IMR-90 (cell line): ENCODE measurements at regions of chr12 and their contacts with region 1.

Region 1: GRCh38 chr12:109255377-109255776 is 53.7 kb downstream of the FOXN4 start:
- DNase-seq: peak; percentile 21
- ATAC-seq: peak; percentile 96
- H3K4me3 ChIP-seq: no peak overlapping the region
- H3K27ac ChIP-seq: no peak overlapping the region
- H3K4me1 ChIP-seq: no peaks in the 10 kb centered on the region
- H3K27me3 ChIP-seq: no peaks in the 10 kb centered on the region
- CTCF ChIP-seq: peak; percentile 33; the same call in 1 of the 2 replicates
- POLR2A ChIP-seq: no peak
- RAD21 ChIP-seq: peak; percentile 41; the same call in 1 of the 2 replicates

Region 2: DNA sequence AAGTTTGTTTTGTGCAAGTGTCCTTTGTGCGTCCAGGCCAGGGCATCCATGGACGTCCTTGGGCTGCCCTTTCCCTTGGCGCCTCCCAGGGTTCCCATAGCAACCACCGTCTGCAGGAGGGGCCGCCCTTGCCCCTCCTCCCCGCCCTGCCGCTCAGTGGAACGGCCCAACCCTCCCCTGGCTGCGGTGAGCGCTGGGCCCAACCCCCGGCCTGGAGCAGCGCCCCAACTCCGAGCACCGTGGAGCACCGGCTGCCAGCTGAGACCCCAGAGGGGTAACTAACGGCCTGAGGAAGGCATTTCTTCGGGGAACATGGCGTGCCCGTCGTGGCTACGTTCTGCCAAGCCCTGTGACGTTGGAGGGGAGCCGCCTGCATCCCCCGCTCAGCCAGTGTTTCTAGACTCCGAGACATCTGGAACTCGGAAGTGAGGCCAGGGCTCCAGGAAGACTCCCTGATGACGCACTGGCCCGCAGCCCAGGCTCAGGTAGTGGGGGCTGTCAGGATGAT is 144.3 kb before region 1 on chr12:
- CTCF ChIA-PET with region 1: no interaction called
- POLR2A ChIA-PET with region 1: no interaction called
- dilution Hi-C with region 1: no loop called
- in situ Hi-C with region 1: no loop called
- intact Hi-C with region 1: loop called (anchors 1 kb)
- DNase-seq: peak; percentile 70
- ATAC-seq: peak; percentile 97
- H3K4me3 ChIP-seq: peak overlapping the region; percentile 68
- H3K27ac ChIP-seq: peak overlapping the region; percentile 78
- H3K4me1 ChIP-seq: no peaks in the 10 kb centered on the region
- H3K27me3 ChIP-seq: no peaks in the 10 kb centered on the region
- CTCF ChIP-seq: no peak
- POLR2A ChIP-seq: peak; percentile 21; the same call in 1 of the 2 replicates
- RAD21 ChIP-seq: no peak

Region 3: GRCh38 chr12:109134186-109134917 is 121.0 kb before region 1 on chr12:
- CTCF ChIA-PET with region 1: no interaction called
- POLR2A ChIA-PET with region 1: no interaction called
- dilution Hi-C with region 1: no loop called
- in situ Hi-C with region 1: no loop called
- intact Hi-C with region 1: loop called (anchors 1 kb)
- DNase-seq: no peak
- ATAC-seq: peak; percentile 82
- H3K4me3 ChIP-seq: no peak overlapping the region
- H3K27ac ChIP-seq: no peak overlapping the region
- H3K4me1 ChIP-seq: peaks cover 4% of the 10 kb centered on the region; the same call in 1 of the 2 replicates
- H3K27me3 ChIP-seq: peaks cover 6% of the 10 kb centered on the region
- CTCF ChIP-seq: peak; percentile 38
- POLR2A ChIP-seq: no peak
- RAD21 ChIP-seq: peak; percentile 36